K562 (cell line): ENCODE measurements at regions of chr9 and their contacts with region 1.

Region 1: GRCh38 chr9:35481347-35481975 is 8.4 kb upstream of the RUSC2 start:
- DNase-seq: peak; percentile 23 to 65 (median 46)
- ATAC-seq: peak; percentile 90
- H3K4me3 ChIP-seq: no peak overlapping the region
- H3K27ac ChIP-seq: no peak overlapping the region
- H3K4me1 ChIP-seq: no peaks in the 10 kb centered on the region; a peak in 1 of 5 replicates
- H3K27me3 ChIP-seq: no peaks in the 10 kb centered on the region; a peak in 1 of 5 replicates
- CTCF ChIP-seq: peak; percentile 68 to 80 (median 79)
- EP300 ChIP-seq: no peak
- POLR2A ChIP-seq: no peak
- RAD21 ChIP-seq: peak; percentile 64 to 76

Region 2: DNA sequence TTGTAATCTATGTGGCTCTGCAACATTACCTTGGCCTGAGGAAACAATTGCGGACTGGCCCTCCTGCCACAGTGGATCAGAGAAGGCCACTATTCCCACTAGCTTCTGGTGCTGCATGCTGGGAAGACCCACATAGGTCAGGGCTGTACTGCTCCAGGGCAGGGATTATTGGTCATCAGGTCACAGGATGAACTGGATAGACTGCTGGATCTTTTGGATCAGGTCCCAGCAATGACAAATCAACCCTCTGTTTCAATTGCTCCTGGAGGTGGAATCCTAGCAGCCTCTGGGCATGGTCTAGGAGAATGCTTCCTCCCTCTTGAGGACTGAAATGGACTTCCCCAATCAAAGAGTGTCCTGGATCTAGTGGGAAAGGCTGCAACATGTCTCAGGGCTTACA is 590.1 kb before region 1 on chr9:
- CTCF ChIA-PET with region 1: interaction called, 3 read pairs
- POLR2A ChIA-PET with region 1: no interaction called
- in situ Hi-C with region 1: loop called (anchors 5 kb)
- intact Hi-C with region 1: no loop called
- DNase-seq: no peak
- ATAC-seq: no peak
- H3K4me3 ChIP-seq: no peak overlapping the region
- H3K27ac ChIP-seq: no peak overlapping the region
- H3K4me1 ChIP-seq: no peaks in the 10 kb centered on the region
- H3K27me3 ChIP-seq: no peaks in the 10 kb centered on the region; a peak in 1 of 5 replicates
- CTCF ChIP-seq: no peak
- EP300 ChIP-seq: no peak
- POLR2A ChIP-seq: no peak
- RAD21 ChIP-seq: no peak

Region 3: DNA sequence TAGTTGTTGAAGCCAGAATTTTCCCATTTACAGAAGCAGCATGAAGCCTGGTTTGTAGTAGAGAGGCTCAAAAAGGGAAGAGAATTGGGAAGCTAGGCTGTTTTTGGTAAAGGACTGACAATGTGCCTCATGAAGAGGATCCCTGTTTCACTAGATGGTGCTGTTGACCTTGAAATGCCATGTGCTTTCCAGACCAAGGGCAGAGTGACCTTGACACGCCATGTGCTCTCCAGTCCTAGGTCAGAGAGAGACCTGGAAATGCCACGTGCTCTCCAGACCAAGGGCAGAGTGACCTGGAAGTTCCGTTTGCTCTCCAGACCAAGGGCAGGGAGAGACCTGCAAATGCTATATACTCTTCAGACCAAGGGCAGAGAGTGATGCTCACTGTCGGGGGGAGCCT is 287.7 kb before region 1 on chr9:
- CTCF ChIA-PET with region 1: interaction called, 4 read pairs
- POLR2A ChIA-PET with region 1: no interaction called
- in situ Hi-C with region 1: no loop called
- intact Hi-C with region 1: loop called (anchors 5 kb)
- DNase-seq: peak in 2 of 4 experiments; percentile 7 to 29
- ATAC-seq: no peak
- H3K4me3 ChIP-seq: no peak overlapping the region
- H3K27ac ChIP-seq: peak overlapping the region; percentile 48; the same call in 1 of the 3 replicates
- H3K4me1 ChIP-seq: peaks cover 0 to 3% of the 10 kb centered on the region in 2 experiments; a peak in 1 of 5 replicates
- H3K27me3 ChIP-seq: no peaks in the 10 kb centered on the region
- CTCF ChIP-seq: peak; percentile 11 to 50 (median 22); a peak in 3 of 6 replicates
- EP300 ChIP-seq: no peak
- POLR2A ChIP-seq: no peak
- RAD21 ChIP-seq: peak in 1 of 2 experiments; percentile 57; a peak in 2 of 4 replicates

Region 4: GRCh38 chr9:35470894-35471293 is 10.6 kb before region 1 on chr9:
- CTCF ChIA-PET with region 1: no interaction called
- POLR2A ChIA-PET with region 1: no interaction called
- in situ Hi-C with region 1: no loop called
- intact Hi-C with region 1: no loop called
- DNase-seq: no peak
- ATAC-seq: no peak
- H3K4me3 ChIP-seq: no peak overlapping the region
- H3K27ac ChIP-seq: no peak overlapping the region
- H3K4me1 ChIP-seq: no peaks in the 10 kb centered on the region
- H3K27me3 ChIP-seq: no peaks in the 10 kb centered on the region; a peak in 1 of 5 replicates
- CTCF ChIP-seq: no peak
- EP300 ChIP-seq: no peak
- POLR2A ChIP-seq: no peak
- RAD21 ChIP-seq: no peak

Region 5: DNA sequence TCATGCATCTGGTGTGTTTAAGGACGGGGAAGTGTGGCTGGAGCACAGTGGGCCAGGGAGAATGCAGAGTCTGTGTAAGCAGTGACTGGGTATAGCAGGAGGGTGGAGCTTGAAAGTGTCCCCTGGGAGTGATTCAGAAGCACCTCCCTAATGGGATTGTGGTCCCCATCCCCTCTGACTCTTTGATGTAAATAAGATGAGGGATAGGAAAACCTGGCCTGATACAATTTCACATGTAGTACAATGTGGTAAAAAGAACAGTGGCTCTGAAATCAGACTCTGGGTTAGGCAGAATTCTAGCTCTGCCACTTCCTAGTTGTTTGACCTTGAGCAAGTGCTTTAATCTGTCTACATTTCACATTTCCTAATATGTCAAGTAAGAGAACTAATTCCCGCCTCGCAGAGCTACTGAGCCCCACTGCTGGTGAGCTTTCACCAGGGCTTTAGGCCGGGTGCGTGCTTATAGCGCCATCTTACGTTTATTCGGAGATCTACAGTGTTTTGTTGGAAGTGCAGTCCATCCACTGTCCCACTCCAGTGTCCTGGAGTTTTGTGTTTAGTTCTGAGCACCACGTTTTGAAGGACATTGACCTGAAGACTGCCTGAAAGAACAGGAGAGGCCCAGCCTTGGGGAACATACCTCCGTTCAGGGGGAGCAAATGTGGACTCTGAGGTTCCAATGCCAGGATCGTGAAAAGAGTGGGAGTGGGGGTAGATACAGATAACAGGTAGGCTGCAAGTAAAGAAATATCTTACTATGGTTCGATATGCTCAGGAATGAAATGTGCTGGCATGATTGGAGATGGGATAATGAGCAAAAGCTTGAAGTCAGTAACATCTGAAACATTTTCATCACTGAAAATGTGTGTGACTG is 72.4 kb after region 1 on chr9:
- CTCF ChIA-PET with region 1: interaction called, 12 read pairs
- POLR2A ChIA-PET with region 1: no interaction called
- in situ Hi-C with region 1: loop called (anchors 5 kb)
- intact Hi-C with region 1: loop called (anchors 1 kb)
- DNase-seq: peak; percentile 62 to 70 (median 64)
- ATAC-seq: peak; percentile 97
- H3K4me3 ChIP-seq: no peak overlapping the region
- H3K27ac ChIP-seq: no peak overlapping the region
- H3K4me1 ChIP-seq: peaks cover 0 to 3% of the 10 kb centered on the region in 2 experiments; a peak in 3 of 5 replicates
- H3K27me3 ChIP-seq: no peaks in the 10 kb centered on the region
- CTCF ChIP-seq: peak; percentile 82 to 91 (median 88)
- EP300 ChIP-seq: no peak
- POLR2A ChIP-seq: no peak
- RAD21 ChIP-seq: peak; percentile 86 to 90

Region 6: DNA sequence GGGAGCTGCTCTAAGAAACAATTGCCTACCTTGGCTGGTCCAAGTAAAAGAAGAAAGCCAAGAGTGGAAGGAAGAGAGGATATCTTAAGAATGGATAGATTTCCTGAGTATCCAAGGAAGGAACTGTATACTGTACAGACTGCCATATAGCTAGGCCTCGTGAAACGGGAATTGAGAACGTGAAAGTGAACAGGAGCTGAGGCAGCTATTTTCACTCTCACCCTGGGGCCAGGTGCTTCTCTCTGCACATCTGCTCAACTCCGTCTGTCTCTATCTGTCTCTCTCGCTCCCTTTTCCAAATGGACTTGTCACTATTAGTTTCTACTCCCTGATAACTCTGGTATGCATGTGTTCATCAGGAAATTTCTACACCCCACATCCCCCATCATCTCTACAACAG is 87.7 kb after region 1 on chr9:
- CTCF ChIA-PET with region 1: no interaction called
- POLR2A ChIA-PET with region 1: no interaction called
- in situ Hi-C with region 1: no loop called
- intact Hi-C with region 1: no loop called
- DNase-seq: no peak
- ATAC-seq: no peak
- H3K4me3 ChIP-seq: no peak overlapping the region
- H3K27ac ChIP-seq: no peak overlapping the region
- H3K4me1 ChIP-seq: no peaks in the 10 kb centered on the region; a peak in 1 of 5 replicates
- H3K27me3 ChIP-seq: no peaks in the 10 kb centered on the region
- CTCF ChIP-seq: no peak
- EP300 ChIP-seq: no peak
- POLR2A ChIP-seq: no peak
- RAD21 ChIP-seq: no peak